ENCODE measurements at regions of chr12 and their contacts with region 1.

Region 1: DNA sequence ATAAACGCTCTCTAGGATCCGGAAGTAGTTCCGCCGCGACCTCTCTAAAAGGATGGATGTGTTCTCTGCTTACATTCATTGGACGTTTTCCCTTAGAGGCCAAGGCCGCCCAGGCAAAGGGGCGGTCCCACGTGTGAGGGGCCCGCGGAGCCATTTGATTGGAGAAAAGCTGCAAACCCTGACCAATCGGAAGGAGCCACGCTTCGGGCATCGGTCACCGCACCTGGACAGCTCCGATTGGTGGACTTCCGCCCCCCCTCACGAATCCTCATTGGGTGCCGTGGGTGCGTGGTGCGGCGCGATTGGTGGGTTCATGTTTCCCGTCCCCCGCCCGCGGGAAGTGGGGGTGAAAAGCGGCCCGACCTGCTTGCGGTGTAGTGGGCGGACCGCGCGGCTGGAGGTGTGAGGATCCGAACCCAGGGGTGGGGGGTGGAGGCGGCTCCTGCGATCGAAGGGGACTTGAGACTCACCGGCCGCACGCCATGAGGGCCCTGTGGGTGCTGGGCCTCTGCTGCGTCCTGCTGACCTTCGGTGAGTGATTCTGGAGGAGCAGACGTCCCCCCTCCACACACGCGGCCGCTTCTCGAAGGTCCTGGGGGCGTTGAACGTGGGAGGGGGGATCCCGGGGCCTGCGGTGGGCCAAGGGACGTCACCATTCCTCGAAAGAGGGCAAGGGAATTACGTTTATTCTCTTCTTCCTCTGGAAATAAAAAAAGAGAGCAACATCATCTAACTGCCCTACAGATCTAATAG is at the start of gene HSP90B1:
- DNase-seq: peak; percentile 100
- ATAC-seq: peak; percentile 72
- H3K4me3 ChIP-seq: peak within 1 kb of the TSS; percentile 80 to 93 (median 85)
- H3K4me3 Mint-ChIP-seq: peak within 1 kb of the TSS; percentile 93
- H3K27ac ChIP-seq: peak within 1 kb of the TSS; percentile 97 to 100
- H3K27ac Mint-ChIP-seq: peak within 1 kb of the TSS; percentile 98
- H3K4me1 ChIP-seq: peaks cover 32 to 34% of the 10 kb centered on the region in 2 donors
- H3K4me1 Mint-ChIP-seq: peaks cover 61% of the 10 kb centered on the region
- H3K27me3 ChIP-seq: no peaks in the 10 kb centered on the region
- H3K27me3 Mint-ChIP-seq: no peaks in the 10 kb centered on the region
- CTCF ChIP-seq: no peak
- total RNA-seq, gene HSP90B1: 203 and 207 TPM in 2 replicates

Region 2: DNA sequence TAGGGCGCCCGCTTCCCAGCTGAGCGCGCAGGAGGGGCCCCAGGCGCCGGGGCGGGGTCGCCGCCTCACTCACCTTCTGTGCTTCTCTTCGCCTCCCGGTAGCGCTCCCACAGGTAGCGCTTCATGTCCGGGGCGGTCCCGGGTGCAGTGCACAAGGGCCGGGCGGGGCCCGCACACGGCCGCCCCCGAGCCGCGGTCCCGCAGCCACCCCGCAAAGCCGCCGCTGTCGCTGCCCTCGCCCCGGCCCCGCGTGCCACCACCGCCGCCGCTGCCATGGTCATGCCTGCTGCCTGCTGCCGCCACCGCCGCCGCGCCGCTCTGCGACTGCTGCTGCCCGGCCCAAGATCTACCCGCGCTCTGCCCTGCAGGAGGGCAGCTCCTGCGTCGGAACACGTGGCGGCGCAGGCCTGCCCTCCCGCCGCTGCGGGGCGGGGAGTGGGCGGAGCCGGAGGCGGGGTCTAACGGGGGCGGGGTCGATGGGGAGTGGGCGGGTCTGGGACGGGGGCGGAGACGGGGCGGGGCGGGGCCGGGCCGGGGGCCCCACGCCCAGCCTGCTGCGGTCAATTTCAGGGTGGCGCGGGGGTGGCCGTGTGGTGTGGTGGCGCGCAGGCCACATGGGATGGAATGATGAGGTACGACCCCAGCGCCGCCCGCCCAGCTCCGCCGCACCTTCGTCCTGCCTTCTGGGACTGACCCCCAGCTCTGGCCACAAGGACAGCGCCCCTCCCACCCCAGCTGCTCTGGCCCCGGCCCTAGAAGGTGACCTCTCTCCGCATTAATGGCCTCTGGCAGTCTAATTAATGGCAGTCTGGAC is 89.1 kb before region 1 on chr12 and contains the start of gene NT5DC3:
- CTCF ChIA-PET with region 1: no interaction called
- POLR2A ChIA-PET with region 1: interaction called, 5 read pairs
- intact Hi-C with region 1: loop called (anchors 1 kb)
- DNase-seq: peak; percentile 92
- ATAC-seq: peak; percentile 91
- H3K4me3 ChIP-seq: peak within 1 kb of the TSS in 4 of 5 experiments; percentile 50 to 86 (median 76)
- H3K4me3 Mint-ChIP-seq: peak within 1 kb of the TSS; percentile 89
- H3K27ac ChIP-seq: no peak within 1 kb of the TSS
- H3K27ac Mint-ChIP-seq: peak within 1 kb of the TSS; percentile 88
- H3K4me1 ChIP-seq: peaks cover 14 to 22% of the 10 kb centered on the region in 2 donors
- H3K4me1 Mint-ChIP-seq: peaks cover 27% of the 10 kb centered on the region
- H3K27me3 ChIP-seq: no peaks in the 10 kb centered on the region
- H3K27me3 Mint-ChIP-seq: no peaks in the 10 kb centered on the region
- CTCF ChIP-seq: no peak
- total RNA-seq, gene NT5DC3: 10.6 and 14.7 TPM in 2 replicates

Region 3: GRCh38 chr12:103884316-103884715 is 45.9 kb before region 1 on chr12:
- CTCF ChIA-PET with region 1: interaction called, 23 read pairs
- POLR2A ChIA-PET with region 1: interaction called, 5 read pairs
- intact Hi-C with region 1: loop called (anchors 1 kb)
- DNase-seq: peak; percentile 55
- ATAC-seq: peak; percentile 56
- H3K4me3 ChIP-seq: no peak overlapping the region
- H3K4me3 Mint-ChIP-seq: no peak overlapping the region
- H3K27ac ChIP-seq: no peak overlapping the region
- H3K27ac Mint-ChIP-seq: no peak overlapping the region
- H3K4me1 ChIP-seq: peaks cover 11 to 15% of the 10 kb centered on the region in 2 donors
- H3K4me1 Mint-ChIP-seq: peaks cover 22% of the 10 kb centered on the region
- H3K27me3 ChIP-seq: no peaks in the 10 kb centered on the region
- H3K27me3 Mint-ChIP-seq: no peaks in the 10 kb centered on the region
- CTCF ChIP-seq: peak; percentile 65

Region 4: GRCh38 chr12:103965590-103966504 is 35.6 kb after region 1 on chr12 and contains the start of gene TDG:
- CTCF ChIA-PET with region 1: interaction called, 9 read pairs
- POLR2A ChIA-PET with region 1: interaction called, 40 read pairs
- intact Hi-C with region 1: loop called (anchors 1 kb)
- DNase-seq: peak; percentile 98
- ATAC-seq: peak; percentile 94
- H3K4me3 ChIP-seq: peak within 1 kb of the TSS; percentile 70 to 96 (median 85)
- H3K4me3 Mint-ChIP-seq: peak within 1 kb of the TSS; percentile 98
- H3K27ac ChIP-seq: peak within 1 kb of the TSS; percentile 81 to 95
- H3K27ac Mint-ChIP-seq: peak within 1 kb of the TSS; percentile 97
- H3K4me1 ChIP-seq: peaks cover 26% of the 10 kb centered on the region in 2 donors
- H3K4me1 Mint-ChIP-seq: peaks cover 41% of the 10 kb centered on the region
- H3K27me3 ChIP-seq: no peaks in the 10 kb centered on the region
- H3K27me3 Mint-ChIP-seq: no peaks in the 10 kb centered on the region
- CTCF ChIP-seq: peak; percentile 26
- total RNA-seq, gene TDG: 35.5 and 40.5 TPM in 2 replicates

Region 5: DNA sequence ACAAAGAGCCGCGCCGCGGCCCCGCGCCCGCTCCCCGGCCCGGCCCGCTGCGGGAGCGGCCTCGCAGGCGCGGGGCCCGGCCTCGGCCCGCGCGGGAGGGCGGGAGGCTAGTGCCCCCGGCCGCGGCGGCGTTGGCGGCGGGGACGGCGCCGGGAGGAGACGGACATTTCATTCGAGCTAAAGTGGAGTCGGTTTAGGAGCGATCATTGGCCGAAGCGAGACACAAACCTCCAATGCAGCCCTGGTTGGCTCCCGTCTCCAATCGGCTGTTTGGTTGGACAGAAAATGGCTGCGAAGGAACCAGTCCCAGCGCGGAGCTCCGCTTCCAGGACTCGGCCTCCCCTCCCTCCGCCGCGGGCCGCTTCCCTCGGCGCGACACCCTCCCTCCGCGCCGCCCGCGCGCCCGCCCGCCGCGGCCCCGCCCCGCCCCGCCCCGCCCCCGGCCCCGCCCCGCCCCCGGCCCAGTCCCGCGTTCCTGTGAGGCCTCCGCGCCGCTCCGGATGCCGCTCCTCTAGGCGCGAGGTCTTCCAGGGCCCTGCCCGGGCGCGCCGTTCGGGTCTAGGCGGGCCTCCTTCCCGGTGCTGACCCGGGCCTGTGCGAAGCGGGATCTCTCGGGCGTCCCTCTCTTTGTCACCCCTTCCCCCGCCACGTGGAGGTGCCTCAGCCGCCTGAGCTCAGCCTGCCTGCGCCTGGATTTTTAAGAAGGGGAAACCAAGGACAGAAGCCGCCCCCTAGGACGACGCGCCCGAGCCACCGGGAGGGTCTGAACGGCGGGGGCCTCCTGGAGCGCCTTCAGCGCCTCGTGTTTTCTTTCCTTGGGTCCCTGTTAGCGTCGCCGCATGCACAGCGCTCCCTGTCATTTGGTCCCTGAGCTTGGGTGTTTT is 207.9 kb after region 1 on chr12 and contains the start of gene NFYB:
- CTCF ChIA-PET with region 1: interaction called, 3 read pairs
- POLR2A ChIA-PET with region 1: interaction called, 10 read pairs
- intact Hi-C with region 1: loop called (anchors 1 kb)
- DNase-seq: peak; percentile 96
- ATAC-seq: peak; percentile 94
- H3K4me3 ChIP-seq: peak within 1 kb of the TSS; percentile 52 to 73 (median 67)
- H3K4me3 Mint-ChIP-seq: peak within 1 kb of the TSS; percentile 93
- H3K27ac ChIP-seq: peak within 1 kb of the TSS; percentile 43 to 70
- H3K27ac Mint-ChIP-seq: peak within 1 kb of the TSS; percentile 92
- H3K4me1 ChIP-seq: peaks cover 24 to 25% of the 10 kb centered on the region in 2 donors
- H3K4me1 Mint-ChIP-seq: peaks cover 16% of the 10 kb centered on the region
- H3K27me3 ChIP-seq: no peaks in the 10 kb centered on the region
- H3K27me3 Mint-ChIP-seq: no peaks in the 10 kb centered on the region
- CTCF ChIP-seq: no peak
- total RNA-seq, gene NFYB: 20.2 and 27.2 TPM in 2 replicates

Measured in B cell (primary cell).